Transverse colon (tissue), 4 donors: ENCODE measurements at regions of chr10 and their contacts with region 1.

Region 1: DNA sequence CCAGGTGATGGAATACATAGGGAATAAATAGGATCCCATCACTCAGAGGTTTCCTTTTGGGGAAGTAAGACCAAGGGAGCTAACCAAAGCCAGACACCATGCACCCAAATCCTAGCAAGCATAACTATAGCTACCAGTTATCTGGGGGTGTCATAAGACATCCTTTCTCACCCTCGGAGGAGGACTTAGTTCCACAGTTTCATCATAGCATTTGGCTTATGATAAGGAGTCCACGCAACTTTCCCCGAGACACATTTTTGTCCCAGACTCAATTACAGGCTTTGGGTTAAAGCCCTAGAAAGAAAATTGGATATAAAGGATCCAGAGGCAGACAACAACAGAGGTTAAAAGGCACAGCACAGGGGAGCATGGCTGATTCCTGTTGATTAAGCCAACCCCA is 442.9 kb downstream of the HTR7 start:
- DNase-seq: no peak
- H3K4me3 ChIP-seq: no peak overlapping the region
- H3K27ac ChIP-seq: no peak overlapping the region
- H3K4me1 ChIP-seq: no peaks in the 10 kb centered on the region
- H3K27me3 ChIP-seq: no peaks in the 10 kb centered on the region
- CTCF ChIP-seq: no peak
- EP300 ChIP-seq: no peak
- POLR2A ChIP-seq: no peak

Region 2: DNA sequence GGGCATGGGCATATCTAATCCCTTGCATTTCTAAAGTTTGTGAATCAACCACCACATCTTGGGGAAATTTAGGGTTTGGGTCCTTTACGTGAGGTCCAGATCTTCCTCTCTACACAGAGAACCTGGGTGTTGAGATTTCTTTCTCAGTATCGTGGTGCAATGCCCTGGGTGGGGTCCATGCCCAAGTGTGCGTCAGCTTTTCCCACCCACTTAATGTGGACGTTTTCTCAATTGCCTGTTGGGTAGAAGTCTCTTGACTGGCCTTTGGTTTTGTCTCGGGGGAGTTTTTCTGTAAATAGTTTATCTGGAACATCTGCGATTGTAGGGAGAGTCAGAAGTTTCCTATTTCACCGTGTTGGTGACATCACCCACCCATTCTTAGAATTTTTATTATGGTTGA is 81.7 kb after region 1 on chr10:
- in situ Hi-C with region 1: no loop called
- intact Hi-C with region 1: loop called (anchors 2 kb)
- DNase-seq: no peak
- H3K4me3 ChIP-seq: no peak overlapping the region
- H3K27ac ChIP-seq: no peak overlapping the region
- H3K4me1 ChIP-seq: no peaks in the 10 kb centered on the region
- H3K27me3 ChIP-seq: no peaks in the 10 kb centered on the region
- CTCF ChIP-seq: no peak
- EP300 ChIP-seq: no peak
- POLR2A ChIP-seq: no peak